Left colon (tissue), 2 donors: ENCODE measurements at regions of chr6 and their contacts with region 1.

Region 1: GRCh38 chr6:125974214-125974866 is 12.0 kb upstream of the TRMT11 start:
- DNase-seq: no peak
- ATAC-seq: peak; percentile 50

Region 2: GRCh38 chr6:125301435-125302391 is 672.6 kb before region 1 on chr6 and contains the start of gene HDDC2:
- intact Hi-C with region 1: loop called in 1 of 2 experiments (anchors 10 kb)
- DNase-seq: peak; percentile 56 to 81
- ATAC-seq: peak; percentile 92
- total RNA-seq, gene HDDC2: 40.7 to 45.6 TPM